ENCODE measurements at regions of chr16 and their contacts with region 1.

Region 1: DNA sequence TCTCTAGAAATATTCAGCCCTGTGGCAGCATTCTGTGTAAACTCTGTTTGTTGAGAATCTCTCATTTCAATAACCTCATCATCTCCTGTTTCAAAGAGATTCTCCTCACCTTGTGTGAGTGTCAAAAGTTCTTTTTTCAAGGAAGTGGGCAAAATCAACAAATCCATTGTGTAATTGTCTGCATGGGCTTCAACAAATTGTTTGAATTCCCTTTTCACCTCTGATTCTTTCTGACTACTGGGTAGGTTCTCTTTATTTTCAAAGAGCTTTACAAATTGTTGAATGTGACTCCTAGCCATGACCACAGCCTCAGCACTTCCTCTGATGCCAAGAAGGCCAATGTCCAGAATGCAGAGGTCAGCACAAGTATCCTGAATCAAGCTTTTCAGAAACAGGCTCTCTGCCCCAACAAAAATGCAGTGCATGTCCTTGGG is 48.0 kb downstream of the N4BP1 start:
- DNase-seq: no peak
- ATAC-seq: peak; percentile 77

Region 2: GRCh38 chr16:47726031-47726675 is 835.8 kb before region 1 on chr16:
- intact Hi-C with region 1: no loop called
- DNase-seq: no peak
- ATAC-seq: no peak

Region 3: GRCh38 chr16:48432136-48432535 is 129.8 kb before region 1 on chr16:
- intact Hi-C with region 1: no loop called
- DNase-seq: no peak
- ATAC-seq: peak; percentile 39

Region 4: DNA sequence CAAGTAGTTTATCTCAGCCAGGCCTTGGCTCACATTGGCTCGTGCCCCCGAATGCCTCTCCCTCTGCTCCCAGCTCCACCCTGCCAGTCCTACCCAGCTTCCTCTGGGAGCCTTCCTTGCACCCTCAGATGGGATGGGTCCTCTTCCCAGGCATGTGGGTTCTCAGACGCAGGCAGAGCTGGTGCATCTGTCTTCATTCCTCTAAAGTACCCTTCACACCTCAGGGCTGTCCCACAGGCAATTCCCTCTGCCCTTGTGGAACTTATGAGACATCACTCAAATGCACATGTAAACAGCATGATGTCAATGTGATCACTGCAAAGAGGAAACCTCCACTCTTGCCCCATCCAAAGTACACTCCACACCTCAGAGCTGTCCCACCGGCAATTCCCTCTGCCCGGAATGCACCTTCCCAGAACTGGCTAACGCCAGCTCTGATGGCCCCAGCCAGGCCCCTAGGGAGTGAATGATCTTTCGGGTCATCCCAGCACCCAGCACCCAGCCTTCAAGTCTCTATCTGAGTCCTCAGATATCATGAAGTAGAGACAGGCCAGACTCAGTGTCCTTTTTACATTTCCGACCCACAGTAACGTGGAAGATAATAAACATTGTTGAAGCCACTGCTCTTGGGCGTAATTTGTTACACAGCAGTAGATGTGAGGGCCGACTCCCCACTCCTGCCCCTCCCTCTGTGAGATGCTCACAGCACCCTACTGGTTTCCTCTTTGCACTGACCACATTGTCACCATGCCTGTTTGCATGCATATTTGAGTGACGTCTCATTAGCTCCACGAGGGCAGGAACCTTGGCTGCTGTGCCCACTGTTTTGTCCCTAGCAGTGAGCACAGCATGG is 37.4 kb before region 1 on chr16:
- intact Hi-C with region 1: loop called (anchors 1 kb)
- DNase-seq: peak; percentile 40
- ATAC-seq: peak; percentile 8

Region 5: DNA sequence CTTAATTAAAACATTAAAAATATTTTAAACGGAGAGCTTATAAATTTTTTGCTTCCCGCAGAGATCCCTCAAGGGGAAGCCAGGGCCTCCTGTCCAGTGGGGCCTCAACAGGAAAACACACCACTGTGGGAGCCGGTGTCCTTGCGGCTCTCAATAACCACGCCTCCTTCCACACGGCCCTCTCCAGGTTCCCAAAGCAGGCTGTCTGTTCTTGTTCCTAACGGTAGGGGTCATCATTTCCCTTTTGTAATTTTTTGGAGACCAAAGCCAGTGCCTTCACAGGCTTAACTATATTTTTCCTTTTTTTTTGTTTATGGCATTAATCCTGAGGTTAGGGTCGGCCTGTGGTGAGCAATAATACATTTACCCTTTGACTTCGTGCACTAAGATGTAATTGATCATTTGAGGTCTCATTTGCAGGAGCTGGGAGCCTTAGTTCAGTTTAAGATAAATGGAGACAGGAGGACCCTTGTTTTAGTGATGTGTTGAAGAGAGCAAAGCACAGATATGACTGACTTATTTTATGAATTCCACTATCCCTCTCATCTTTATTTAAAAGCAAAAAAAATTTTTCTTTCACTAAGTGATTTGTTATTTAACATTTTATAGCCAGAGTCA is 125.6 kb after region 1 on chr16:
- intact Hi-C with region 1: no loop called
- DNase-seq: no peak
- ATAC-seq: no peak

Measured in sciatic nerve (tissue), 2 donors.